Ascending aorta (tissue), 2 donors: ENCODE measurements at regions of chr1 and their contacts with region 1.

Region 1: DNA sequence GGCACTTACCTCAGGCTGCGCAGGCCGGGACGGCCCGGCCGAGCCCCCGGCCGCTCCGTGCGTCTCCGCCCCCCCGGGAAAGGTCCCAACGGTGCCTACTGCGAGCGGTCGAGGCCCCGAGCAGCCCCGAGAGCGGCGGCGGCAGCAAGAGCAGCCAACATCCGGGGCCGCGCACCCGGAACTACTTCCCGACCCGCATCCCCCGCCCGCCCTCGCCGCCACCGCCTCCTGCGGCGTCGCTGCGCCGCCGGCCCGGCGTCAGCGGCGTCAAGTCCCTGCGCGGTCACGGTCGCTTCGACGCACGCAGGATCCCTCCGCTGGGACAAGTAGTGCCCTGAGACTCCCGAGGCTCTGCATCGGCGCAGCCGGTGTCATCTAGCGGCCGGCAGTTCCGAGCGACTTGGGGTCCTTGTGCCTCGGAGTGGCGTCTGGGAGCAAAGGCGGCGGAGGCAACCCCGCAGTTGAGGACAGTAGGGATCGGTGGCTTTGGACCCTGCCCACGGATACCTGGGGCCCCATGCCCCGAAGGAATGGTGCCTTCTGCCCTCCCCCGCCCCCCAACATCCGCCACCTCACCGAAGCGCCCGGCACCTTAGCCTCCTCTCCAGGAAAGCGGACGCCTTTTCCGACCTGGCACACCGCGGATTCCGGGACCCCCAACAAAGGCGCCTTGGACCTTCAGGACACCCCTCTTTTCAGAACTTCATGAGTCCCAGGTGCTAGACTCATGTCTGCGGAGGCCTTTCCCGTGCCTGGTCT is at the start of gene FOXJ3:
- DNase-seq: peak; percentile 43 to 93
- H3K4me3 ChIP-seq: peak within 1 kb of the TSS; percentile 95 to 99
- H3K27ac ChIP-seq: peak within 1 kb of the TSS; percentile 88 to 91
- H3K4me1 ChIP-seq: peaks cover 0 to 11% of the 10 kb centered on the region in 2 donors
- H3K27me3 ChIP-seq: no peaks in the 10 kb centered on the region
- CTCF ChIP-seq: no peak
- total RNA-seq, gene FOXJ3: 62.8 TPM

Region 2: GRCh38 chr1:41662061-41662764 is 673.0 kb before region 1 on chr1:
- intact Hi-C with region 1: loop called (anchors 10 kb)
- DNase-seq: peak; percentile 46 to 87
- H3K4me3 ChIP-seq: peak overlapping the region; percentile 71 to 96
- H3K27ac ChIP-seq: peak overlapping the region; percentile 97 to 99
- H3K4me1 ChIP-seq: peaks cover 4 to 20% of the 10 kb centered on the region in 2 donors
- H3K27me3 ChIP-seq: no peaks in the 10 kb centered on the region
- CTCF ChIP-seq: no peak

Region 3: GRCh38 chr1:42173155-42173933 is 161.9 kb before region 1 on chr1:
- intact Hi-C with region 1: loop called (anchors 10 kb)
- DNase-seq: peak in 1 of 2 donors; percentile 74
- H3K4me3 ChIP-seq: no peak overlapping the region
- H3K27ac ChIP-seq: peak overlapping the region in 1 of 2 donors; percentile 7
- H3K4me1 ChIP-seq: peaks cover 0 to 19% of the 10 kb centered on the region in 2 donors
- H3K27me3 ChIP-seq: no peaks in the 10 kb centered on the region
- CTCF ChIP-seq: peak; percentile 70 to 94 (median 85)

Region 4: GRCh38 chr1:42657971-42658879 is 323.0 kb after region 1 on chr1 and contains the start of gene PPIH:
- intact Hi-C with region 1: loop called (anchors 5 kb)
- DNase-seq: peak; percentile 76 to 97
- H3K4me3 ChIP-seq: peak within 1 kb of the TSS; percentile 65 to 72
- H3K27ac ChIP-seq: peak within 1 kb of the TSS; percentile 67 to 78
- H3K4me1 ChIP-seq: peaks cover 3 to 14% of the 10 kb centered on the region in 2 donors
- H3K27me3 ChIP-seq: no peaks in the 10 kb centered on the region
- CTCF ChIP-seq: peak in 2 of 3 experiments; percentile 37 to 40
- total RNA-seq, gene PPIH: 2.2 TPM

Region 5: GRCh38 chr1:43991476-43992231 is 1656.4 kb after region 1 on chr1 and contains the start of gene CCDC24:
- intact Hi-C with region 1: loop called (anchors 10 kb)
- DNase-seq: peak; percentile 69 to 95
- H3K4me3 ChIP-seq: peak within 1 kb of the TSS; percentile 71 to 72
- H3K27ac ChIP-seq: peak within 1 kb of the TSS; percentile 72 to 80
- H3K4me1 ChIP-seq: peaks cover 10 to 20% of the 10 kb centered on the region in 2 donors
- H3K27me3 ChIP-seq: no peaks in the 10 kb centered on the region
- CTCF ChIP-seq: no peak
- total RNA-seq, gene CCDC24: 4.8 TPM